Naive thymus-derived CD4-positive, alpha-beta T cell (primary cell): ENCODE measurements at regions of chr5 and their contacts with region 1.

Region 1: GRCh38 chr5:62354028-62354874 is 48.2 kb downstream of the KIF2A start:
- DNase-seq: peak in 7 of 9 donors; percentile 28 to 53 (median 44)
- ATAC-seq: peak; percentile 73
- H3K4me3 ChIP-seq: no peak overlapping the region
- H3K4me3 Mint-ChIP-seq: no peak overlapping the region
- H3K27ac ChIP-seq: no peak overlapping the region
- H3K27ac Mint-ChIP-seq: peak overlapping the region in 4 of 9 donors; percentile 12 to 40 (median 28)
- H3K4me1 ChIP-seq: no peaks in the 10 kb centered on the region
- H3K4me1 Mint-ChIP-seq: peaks cover 0 to 22% (median 5%) of the 10 kb centered on the region in 7 donors
- H3K27me3 ChIP-seq: no peaks in the 10 kb centered on the region
- H3K27me3 Mint-ChIP-seq: no peaks in the 10 kb centered on the region

Region 2: DNA sequence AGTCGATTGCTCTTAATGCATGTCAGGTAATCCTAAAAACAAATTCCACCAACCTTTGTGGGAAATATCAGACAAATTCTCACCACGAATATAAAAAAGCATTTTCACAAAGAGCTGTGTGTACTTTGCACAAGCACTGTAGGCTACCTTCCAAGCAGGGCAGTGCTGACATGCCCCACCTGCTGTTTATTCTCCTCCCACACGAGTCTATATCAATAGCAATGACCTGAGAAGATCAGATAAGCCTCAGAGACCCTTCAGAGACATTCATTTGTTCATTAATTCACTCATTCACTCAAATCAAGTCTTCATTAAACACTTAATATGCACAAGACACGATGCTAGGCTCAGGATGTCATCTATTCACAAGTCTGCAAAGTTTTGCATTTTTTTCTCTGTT is 553.0 kb before region 1 on chr5:
- CTCF ChIA-PET with region 1: no interaction called
- POLR2A ChIA-PET with region 1: no interaction called
- intact Hi-C with region 1: no loop called
- DNase-seq: no peak
- ATAC-seq: no peak
- H3K4me3 ChIP-seq: no peak overlapping the region
- H3K4me3 Mint-ChIP-seq: no peak overlapping the region
- H3K27ac ChIP-seq: no peak overlapping the region
- H3K27ac Mint-ChIP-seq: no peak overlapping the region
- H3K4me1 ChIP-seq: no peaks in the 10 kb centered on the region
- H3K4me1 Mint-ChIP-seq: no peaks in the 10 kb centered on the region
- H3K27me3 ChIP-seq: no peaks in the 10 kb centered on the region
- H3K27me3 Mint-ChIP-seq: peaks cover 0 to 15% (median 0%) of the 10 kb centered on the region in 5 donors

Region 3: GRCh38 chr5:62297026-62297425 is 57.2 kb before region 1 on chr5:
- CTCF ChIA-PET with region 1: interaction called, 4 read pairs
- POLR2A ChIA-PET with region 1: interaction called, 3 read pairs
- intact Hi-C with region 1: loop called in 1 of 2 experiments (anchors 1 kb)
- DNase-seq: peak in 3 of 9 donors; percentile 18 to 21 (median 20)
- ATAC-seq: no peak
- H3K4me3 ChIP-seq: no peak overlapping the region
- H3K4me3 Mint-ChIP-seq: peak overlapping the region; percentile 30 to 81 (median 72)
- H3K27ac ChIP-seq: no peak overlapping the region
- H3K27ac Mint-ChIP-seq: peak overlapping the region in 8 of 9 donors; percentile 15 to 84 (median 74)
- H3K4me1 ChIP-seq: peaks cover 46% of the 10 kb centered on the region in 2 donors
- H3K4me1 Mint-ChIP-seq: peaks cover 24 to 69% (median 55%) of the 10 kb centered on the region in 7 donors
- H3K27me3 ChIP-seq: no peaks in the 10 kb centered on the region
- H3K27me3 Mint-ChIP-seq: no peaks in the 10 kb centered on the region

Region 4: GRCh38 chr5:62340392-62340791 is 13.9 kb before region 1 on chr5:
- CTCF ChIA-PET with region 1: interaction called, 4 read pairs
- POLR2A ChIA-PET with region 1: interaction called, 3 read pairs
- intact Hi-C with region 1: loop called in 1 of 2 experiments (anchors 1 kb)
- DNase-seq: peak in 2 of 9 donors; percentile 18 to 37
- ATAC-seq: peak; percentile 31
- H3K4me3 ChIP-seq: no peak overlapping the region
- H3K4me3 Mint-ChIP-seq: peak overlapping the region in 1 of 10 donors; percentile 16
- H3K27ac ChIP-seq: no peak overlapping the region
- H3K27ac Mint-ChIP-seq: peak overlapping the region in 3 of 9 donors; percentile 7 to 21 (median 17)
- H3K4me1 ChIP-seq: peaks cover 16 to 19% of the 10 kb centered on the region in 2 donors
- H3K4me1 Mint-ChIP-seq: peaks cover 32 to 72% (median 66%) of the 10 kb centered on the region in 7 donors
- H3K27me3 ChIP-seq: no peaks in the 10 kb centered on the region
- H3K27me3 Mint-ChIP-seq: no peaks in the 10 kb centered on the region

Region 5: DNA sequence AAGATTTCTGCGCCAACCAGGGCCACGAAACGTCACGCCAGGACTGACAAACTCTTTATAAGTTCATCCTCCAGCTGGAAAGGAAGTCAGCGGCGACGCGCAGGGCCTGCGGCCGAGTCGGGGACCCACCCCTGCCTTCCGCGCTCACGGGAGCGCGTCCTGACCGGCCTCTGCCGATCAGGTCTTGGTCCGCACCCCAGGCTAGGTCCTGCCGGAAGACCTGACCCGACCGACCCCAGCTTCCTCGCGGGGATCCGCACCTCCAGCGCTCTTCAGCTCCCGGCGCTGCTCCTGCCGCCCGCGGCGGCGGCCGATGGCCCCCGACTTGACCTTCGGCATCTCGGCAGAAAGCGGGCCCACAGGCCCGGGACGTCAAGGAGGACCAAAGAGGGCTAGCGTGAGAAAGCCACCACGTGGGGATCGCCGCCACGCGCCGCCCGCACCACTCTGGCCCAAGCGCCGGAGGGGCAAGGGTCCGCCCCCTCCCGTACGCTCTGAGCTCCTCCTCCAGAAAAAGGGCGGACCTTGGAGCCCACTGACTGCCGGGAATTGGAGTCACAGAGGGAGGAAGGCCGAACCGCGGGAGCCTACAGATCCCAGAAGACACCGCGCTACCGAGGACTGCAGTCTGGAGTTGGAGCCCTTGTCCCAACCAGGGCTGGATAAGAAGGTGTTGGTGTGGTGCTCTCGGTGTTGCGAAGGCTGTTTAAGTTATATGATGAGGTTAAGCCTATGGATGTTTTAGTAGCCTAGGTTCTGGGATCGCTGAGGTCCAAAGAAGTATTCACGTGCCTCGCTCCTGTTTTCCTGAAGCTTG is 49.4 kb after region 1 on chr5 and contains the start of gene DIMT1:
- CTCF ChIA-PET with region 1: no interaction called
- POLR2A ChIA-PET with region 1: interaction called, 3 read pairs
- intact Hi-C with region 1: loop called in 1 of 2 experiments (anchors 2 kb)
- DNase-seq: peak; percentile 79 to 92 (median 90)
- ATAC-seq: peak; percentile 99
- H3K4me3 ChIP-seq: peak within 1 kb of the TSS; percentile 99
- H3K4me3 Mint-ChIP-seq: peak within 1 kb of the TSS; percentile 93 to 100 (median 98)
- H3K27ac ChIP-seq: peak within 1 kb of the TSS; percentile 89
- H3K27ac Mint-ChIP-seq: peak within 1 kb of the TSS; percentile 87 to 98 (median 94)
- H3K4me1 ChIP-seq: peaks cover 12 to 13% of the 10 kb centered on the region in 2 donors
- H3K4me1 Mint-ChIP-seq: peaks cover 21 to 38% (median 35%) of the 10 kb centered on the region in 7 donors
- H3K27me3 ChIP-seq: no peaks in the 10 kb centered on the region
- H3K27me3 Mint-ChIP-seq: no peaks in the 10 kb centered on the region
- total RNA-seq, gene DIMT1: 18.3 to 28.8 (median 21.3) TPM

Region 6: DNA sequence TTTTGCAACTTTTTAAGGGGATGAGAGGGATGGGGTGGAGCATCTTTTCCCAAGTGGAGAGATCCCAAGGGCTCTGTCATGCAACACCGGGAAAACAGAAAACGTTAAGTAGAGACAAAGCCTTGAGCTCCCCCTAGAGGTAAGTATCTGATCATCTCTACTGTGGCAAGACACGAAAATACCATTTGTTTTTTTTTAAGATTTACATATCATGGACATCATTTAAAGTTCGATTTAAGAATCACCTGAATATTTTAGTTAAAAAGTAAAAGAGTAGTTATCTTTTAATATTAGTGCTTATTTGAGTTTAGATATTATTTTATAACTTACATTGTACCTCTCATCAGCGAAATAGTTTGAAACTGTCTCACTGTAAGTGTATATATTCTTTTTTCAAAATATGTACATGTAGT is 424.8 kb after region 1 on chr5:
- CTCF ChIA-PET with region 1: no interaction called
- POLR2A ChIA-PET with region 1: no interaction called
- intact Hi-C with region 1: loop called in 1 of 2 experiments (anchors 10 kb)
- DNase-seq: peak in 6 of 9 donors; percentile 2 to 36 (median 26)
- ATAC-seq: peak; percentile 61
- H3K4me3 ChIP-seq: no peak overlapping the region
- H3K4me3 Mint-ChIP-seq: peak overlapping the region in 3 of 10 donors; percentile 19 to 59 (median 40)
- H3K27ac ChIP-seq: no peak overlapping the region
- H3K27ac Mint-ChIP-seq: no peak overlapping the region
- H3K4me1 ChIP-seq: no peaks in the 10 kb centered on the region
- H3K4me1 Mint-ChIP-seq: peaks cover 0 to 16% (median 0%) of the 10 kb centered on the region in 7 donors
- H3K27me3 ChIP-seq: no peaks in the 10 kb centered on the region
- H3K27me3 Mint-ChIP-seq: peaks cover 0 to 7% (median 0%) of the 10 kb centered on the region in 5 donors